Common myeloid progenitor, CD34-positive (primary cell): ENCODE measurements at regions of chr14 and their contacts with region 1.

Region 1: GRCh38 chr14:63770187-63770807 is 42.4 kb upstream of the SGPP1 start:
- DNase-seq: peak; percentile 56 to 80 (median 76)
- H3K4me3 ChIP-seq: no peak overlapping the region
- H3K27ac ChIP-seq: no peak overlapping the region
- H3K4me1 ChIP-seq: no peaks in the 10 kb centered on the region
- H3K27me3 ChIP-seq: no peaks in the 10 kb centered on the region

Region 2: GRCh38 chr14:63388763-63389431 is 381.4 kb before region 1 on chr14:
- CTCF ChIA-PET with region 1: interaction called, 17 read pairs
- POLR2A ChIA-PET with region 1: no interaction called
- DNase-seq: peak; percentile 52 to 73 (median 68)
- H3K4me3 ChIP-seq: no peak overlapping the region
- H3K27ac ChIP-seq: no peak overlapping the region
- H3K4me1 ChIP-seq: peaks cover 0 to 4% (median 3%) of the 10 kb centered on the region in 4 experiments
- H3K27me3 ChIP-seq: no peaks in the 10 kb centered on the region

Region 3: DNA sequence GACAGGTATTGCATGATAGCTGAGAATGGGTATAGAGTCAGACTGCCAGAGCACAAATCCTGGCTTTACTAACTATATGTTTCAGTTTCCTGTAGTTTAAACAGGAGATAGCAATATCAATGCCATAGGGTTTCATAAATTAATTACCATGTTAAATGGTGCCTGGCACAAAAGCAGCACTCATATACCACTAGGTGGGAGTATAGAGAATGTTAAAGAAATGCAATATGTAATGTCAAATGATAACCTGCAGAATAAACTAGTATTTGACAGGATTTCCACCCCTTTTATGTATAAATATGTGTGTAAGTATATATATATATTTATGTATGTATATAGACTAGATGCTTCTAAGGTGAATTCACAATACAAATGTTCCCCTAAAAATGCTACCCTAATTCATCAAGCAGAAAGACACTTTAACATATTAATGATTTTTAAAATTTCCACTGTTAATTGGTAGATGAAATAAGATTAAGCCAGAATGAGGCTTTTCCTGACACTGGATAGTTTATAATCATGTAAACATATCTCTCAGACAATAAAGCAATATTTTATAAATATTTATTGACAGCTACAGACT is 137.3 kb before region 1 on chr14:
- CTCF ChIA-PET with region 1: interaction called, 24 read pairs
- POLR2A ChIA-PET with region 1: no interaction called
- DNase-seq: peak; percentile 38 to 69 (median 69)
- H3K4me3 ChIP-seq: no peak overlapping the region
- H3K27ac ChIP-seq: no peak overlapping the region
- H3K4me1 ChIP-seq: no peaks in the 10 kb centered on the region
- H3K27me3 ChIP-seq: no peaks in the 10 kb centered on the region

Region 4: DNA sequence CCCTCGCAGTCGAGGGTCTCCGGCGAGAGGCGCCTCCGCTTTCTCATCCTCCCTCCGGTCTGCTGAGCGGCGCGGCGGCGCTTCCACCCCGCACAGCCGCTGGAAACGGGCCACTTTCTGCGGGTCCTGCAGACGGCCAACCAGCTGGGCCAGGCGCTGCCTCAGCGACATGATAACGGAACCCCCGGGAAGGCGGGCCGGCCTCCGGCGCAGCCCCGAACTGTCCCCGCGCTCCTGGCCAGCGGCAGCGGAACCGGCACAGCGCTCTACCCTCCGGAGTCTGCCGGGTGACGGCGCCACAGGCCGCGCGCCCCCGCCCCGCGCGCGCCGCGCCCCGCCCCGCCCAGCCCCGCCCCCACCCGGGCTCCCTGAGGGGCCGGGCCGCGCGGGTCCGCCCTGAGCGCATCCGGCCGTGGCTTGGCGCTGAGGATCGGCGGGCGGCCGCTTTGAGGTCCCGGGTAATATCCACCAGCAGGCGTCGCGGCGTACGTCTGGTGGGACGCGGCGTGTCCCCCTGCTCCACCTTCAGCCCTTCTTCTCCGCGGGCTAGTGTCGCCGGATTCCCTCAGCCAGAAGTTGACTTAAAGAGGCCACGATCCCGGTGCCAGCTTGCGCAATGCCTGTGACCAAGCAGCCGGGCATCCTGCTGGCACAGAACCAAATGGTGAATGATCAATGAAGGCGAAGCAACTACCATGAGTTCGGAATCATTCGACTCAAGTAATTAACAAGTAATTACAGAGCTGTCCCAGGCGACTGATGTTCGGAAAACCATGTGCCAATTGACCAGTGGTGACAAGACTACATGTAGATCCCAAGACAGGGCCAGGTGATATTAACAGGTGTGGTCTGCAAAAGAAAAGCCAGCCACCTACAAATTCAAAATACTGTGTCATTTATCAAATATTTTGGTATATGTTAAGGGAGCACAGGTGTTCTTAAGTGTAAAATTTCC is 42.2 kb before region 1 on chr14 and contains the start of gene SGPP1:
- CTCF ChIA-PET with region 1: interaction called, 14 read pairs
- POLR2A ChIA-PET with region 1: no interaction called
- DNase-seq: peak; percentile 87 to 92 (median 90)
- H3K4me3 ChIP-seq: peak within 1 kb of the TSS; percentile 83 to 98 (median 93)
- H3K27ac ChIP-seq: peak within 1 kb of the TSS in 1 of 2 experiments; percentile 66
- H3K4me1 ChIP-seq: peaks cover 13 to 24% (median 17%) of the 10 kb centered on the region in 4 experiments
- H3K27me3 ChIP-seq: no peaks in the 10 kb centered on the region

Region 5: DNA sequence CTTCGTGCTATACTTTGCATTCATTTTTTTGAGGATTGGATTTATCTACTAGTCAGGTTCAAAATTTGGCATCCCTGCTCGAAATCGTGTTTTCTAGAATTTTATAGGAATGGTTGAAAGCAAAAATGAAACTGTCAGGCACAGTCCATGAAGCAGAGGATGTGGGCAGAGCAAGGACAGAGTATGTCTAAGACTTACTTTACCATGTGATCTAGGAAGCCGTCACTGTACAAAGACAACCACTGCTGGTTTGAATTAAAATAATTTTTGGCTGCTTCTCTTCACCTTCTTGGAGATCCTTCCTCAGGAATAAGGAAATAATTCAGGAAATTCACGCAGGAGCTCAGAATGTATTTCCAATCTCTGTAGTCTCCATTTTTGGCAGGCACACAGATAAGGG is 10.8 kb before region 1 on chr14:
- CTCF ChIA-PET with region 1: interaction called, 20 read pairs
- POLR2A ChIA-PET with region 1: no interaction called
- DNase-seq: peak in 2 of 3 donors; percentile 54 to 65
- H3K4me3 ChIP-seq: peak overlapping the region in 4 of 7 experiments; percentile 29 to 48 (median 36)
- H3K27ac ChIP-seq: no peak overlapping the region
- H3K4me1 ChIP-seq: peaks cover 0 to 6% (median 5%) of the 10 kb centered on the region in 4 experiments
- H3K27me3 ChIP-seq: no peaks in the 10 kb centered on the region